ENCODE measurements at regions of chr7 and their contacts with region 1.

Region 1: GRCh38 chr7:83936056-83936708 is 258.4 kb downstream of the SEMA3A start:
- DNase-seq: peak; percentile 78
- H3K4me3 ChIP-seq: no peak overlapping the region
- H3K27ac ChIP-seq: no peak overlapping the region
- H3K4me1 ChIP-seq: no peaks in the 10 kb centered on the region
- H3K27me3 ChIP-seq: no peaks in the 10 kb centered on the region
- CTCF ChIP-seq: peak; percentile 76 to 78
- POLR2A ChIP-seq: no peak

Region 2: DNA sequence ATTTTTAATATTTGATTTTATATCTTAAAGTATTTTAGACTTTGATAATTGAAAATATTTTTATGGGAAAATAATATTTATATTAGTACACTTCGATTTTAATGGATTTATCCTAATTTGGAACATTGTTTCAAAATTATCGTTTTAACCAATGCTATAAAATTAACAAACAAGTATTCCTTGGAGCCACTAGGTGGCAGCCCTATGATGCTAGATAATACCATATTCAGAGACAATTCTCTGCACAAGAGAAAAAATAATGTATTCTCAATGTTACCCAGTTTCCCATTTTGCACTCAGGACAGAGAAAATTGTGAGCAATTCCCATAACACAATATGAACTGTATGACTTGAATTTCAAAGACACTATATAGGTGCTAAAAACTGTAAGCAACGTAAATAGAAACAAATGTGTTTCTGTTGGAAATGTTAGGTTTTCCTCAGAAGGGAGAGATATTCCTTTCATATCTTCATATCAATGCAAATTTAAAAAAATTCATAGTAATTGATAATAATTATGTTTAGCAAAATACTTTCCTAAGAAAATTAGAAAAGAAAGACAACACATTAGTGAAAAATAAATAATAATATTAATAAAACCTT is 525.1 kb before region 1 on chr7:
- CTCF ChIA-PET with region 1: interaction called, 3 read pairs
- POLR2A ChIA-PET with region 1: no interaction called
- dilution Hi-C with region 1: no loop called
- intact Hi-C with region 1: loop called (anchors 5 kb)
- DNase-seq: peak; percentile 54
- H3K4me3 ChIP-seq: no peak overlapping the region
- H3K27ac ChIP-seq: no peak overlapping the region
- H3K4me1 ChIP-seq: no peaks in the 10 kb centered on the region
- H3K27me3 ChIP-seq: peaks cover 0 to 6% of the 10 kb centered on the region in 2 experiments
- CTCF ChIP-seq: peak; percentile 42 to 45
- POLR2A ChIP-seq: no peak

Region 3: DNA sequence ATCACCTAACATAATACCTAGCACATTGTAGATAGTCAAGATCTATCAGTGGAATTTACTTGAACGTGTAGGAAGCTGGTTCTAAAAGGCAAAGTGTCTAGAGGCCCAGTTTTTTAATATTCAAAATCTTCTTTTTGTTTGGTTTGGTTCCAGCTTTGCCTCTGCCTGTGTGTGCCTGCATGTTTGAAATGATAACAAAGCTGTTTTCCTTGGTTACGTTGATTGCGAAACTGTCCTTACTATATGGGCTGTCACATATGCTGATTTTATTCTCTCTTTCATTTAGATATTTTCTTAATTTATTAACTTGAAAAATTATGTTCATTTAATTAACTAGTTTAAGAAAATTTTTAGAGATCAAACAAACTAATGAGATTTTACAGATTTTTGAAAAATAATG is 21.2 kb after region 1 on chr7:
- CTCF ChIA-PET with region 1: interaction called, 16 read pairs
- POLR2A ChIA-PET with region 1: no interaction called
- dilution Hi-C with region 1: no loop called
- intact Hi-C with region 1: no loop called
- DNase-seq: no peak
- H3K4me3 ChIP-seq: no peak overlapping the region
- H3K27ac ChIP-seq: no peak overlapping the region
- H3K4me1 ChIP-seq: no peaks in the 10 kb centered on the region
- H3K27me3 ChIP-seq: no peaks in the 10 kb centered on the region
- CTCF ChIP-seq: no peak
- POLR2A ChIP-seq: no peak

Region 4: GRCh38 chr7:84058311-84059076 is 122.3 kb after region 1 on chr7:
- CTCF ChIA-PET with region 1: no interaction called
- POLR2A ChIA-PET with region 1: no interaction called
- dilution Hi-C with region 1: no loop called
- intact Hi-C with region 1: no loop called
- DNase-seq: peak; percentile 44
- H3K4me3 ChIP-seq: no peak overlapping the region
- H3K27ac ChIP-seq: no peak overlapping the region
- H3K4me1 ChIP-seq: peaks cover 24% of the 10 kb centered on the region
- H3K27me3 ChIP-seq: no peaks in the 10 kb centered on the region
- CTCF ChIP-seq: no peak
- POLR2A ChIP-seq: no peak

Region 5: DNA sequence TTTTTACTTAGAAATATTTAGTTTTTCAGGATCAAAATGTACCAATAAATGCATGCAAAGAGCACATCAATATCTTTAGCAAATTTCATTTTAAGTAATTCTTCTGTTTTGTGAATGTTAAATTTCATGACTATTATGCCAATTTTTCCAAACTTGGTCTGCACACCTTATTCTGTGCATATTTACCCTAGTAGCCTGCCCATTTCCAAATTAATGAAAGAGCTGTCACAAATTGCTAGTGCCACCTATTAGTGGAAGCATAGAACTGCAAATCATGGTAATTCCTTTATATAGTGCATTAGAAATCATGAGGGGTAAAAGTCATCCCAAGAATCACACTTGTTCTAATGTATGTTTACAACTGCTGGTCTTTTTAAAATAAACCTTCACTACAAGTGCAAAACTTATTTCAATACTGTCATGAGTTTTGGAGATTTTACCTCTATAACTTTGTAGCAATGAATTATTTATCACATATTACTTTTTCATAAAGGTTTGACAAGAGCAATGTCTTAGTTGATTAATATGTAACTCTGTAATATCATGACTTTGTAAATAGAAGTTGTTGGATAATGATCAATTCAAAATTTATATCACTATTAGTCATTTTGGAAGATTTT is 252.7 kb after region 1 on chr7:
- CTCF ChIA-PET with region 1: interaction called, 20 read pairs
- POLR2A ChIA-PET with region 1: no interaction called
- dilution Hi-C with region 1: no loop called
- intact Hi-C with region 1: loop called (anchors 2 kb)
- DNase-seq: peak; percentile 66
- H3K4me3 ChIP-seq: no peak overlapping the region
- H3K27ac ChIP-seq: no peak overlapping the region
- H3K4me1 ChIP-seq: peaks cover 7% of the 10 kb centered on the region
- H3K27me3 ChIP-seq: no peaks in the 10 kb centered on the region
- CTCF ChIP-seq: peak; percentile 19 to 36
- POLR2A ChIP-seq: no peak

Region 6: DNA sequence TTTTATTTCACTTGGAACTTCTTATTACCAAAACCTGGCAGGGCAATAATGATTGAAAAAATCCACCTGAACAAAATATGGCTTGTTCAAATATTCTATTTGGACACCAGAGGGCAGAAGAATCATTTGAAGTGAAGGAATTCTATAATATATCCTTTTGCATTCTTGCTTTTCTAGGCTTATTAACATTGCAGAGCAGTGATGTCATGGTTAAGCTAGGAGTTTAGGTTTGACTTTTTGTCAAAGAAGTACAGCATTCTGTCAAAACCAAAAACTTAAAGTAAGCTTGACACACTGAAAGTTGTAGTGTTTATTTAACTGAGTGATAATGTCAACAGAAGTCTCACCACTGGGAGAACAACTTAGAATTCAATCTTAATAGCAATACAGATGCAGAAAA is 1094.7 kb after region 1 on chr7:
- CTCF ChIA-PET with region 1: interaction called, 302 read pairs
- POLR2A ChIA-PET with region 1: no interaction called
- dilution Hi-C with region 1: no loop called
- intact Hi-C with region 1: no loop called
- DNase-seq: peak; percentile 50
- H3K4me3 ChIP-seq: no peak overlapping the region
- H3K27ac ChIP-seq: no peak overlapping the region
- H3K4me1 ChIP-seq: peaks cover 2% of the 10 kb centered on the region
- H3K27me3 ChIP-seq: no peaks in the 10 kb centered on the region
- CTCF ChIP-seq: peak; percentile 17 to 19
- POLR2A ChIP-seq: no peak

Region 7: GRCh38 chr7:85554236-85555178 is 1618.3 kb after region 1 on chr7:
- CTCF ChIA-PET with region 1: interaction called, 3 read pairs
- POLR2A ChIA-PET with region 1: no interaction called
- dilution Hi-C with region 1: no loop called
- intact Hi-C with region 1: loop called (anchors 5 kb)
- DNase-seq: peak; percentile 63
- H3K4me3 ChIP-seq: no peak overlapping the region
- H3K27ac ChIP-seq: no peak overlapping the region
- H3K4me1 ChIP-seq: no peaks in the 10 kb centered on the region
- H3K27me3 ChIP-seq: no peaks in the 10 kb centered on the region
- CTCF ChIP-seq: peak; percentile 44 to 49
- POLR2A ChIP-seq: no peak

Measured in endothelial cell of umbilical vein (primary cell).